PC-9 (cell line): ENCODE measurements at regions of chr19 and their contacts with region 1.

Region 1: GRCh38 chr19:47514869-47515588 is at the start of gene NAPA:
- DNase-seq: peak; percentile 99 to 100
- H3K4me3 ChIP-seq: peak within 1 kb of the TSS; percentile 94
- H3K27ac ChIP-seq: peak within 1 kb of the TSS; percentile 55
- H3K4me1 ChIP-seq: peaks cover 14% of the 10 kb centered on the region
- H3K27me3 ChIP-seq: no peaks in the 10 kb centered on the region
- CTCF ChIP-seq: no peak
- total RNA-seq, gene NAPA: 78.3 and 80.4 TPM in 2 replicates

Region 2: GRCh38 chr19:46346821-46347571 is 1168.0 kb before region 1 on chr19 and contains the start of gene PPP5C:
- CTCF ChIA-PET with region 1: interaction called, 11 read pairs
- POLR2A ChIA-PET with region 1: no interaction called
- intact Hi-C with region 1: no loop called
- DNase-seq: peak; percentile 86 to 93
- H3K4me3 ChIP-seq: peak within 1 kb of the TSS; percentile 97
- H3K27ac ChIP-seq: peak within 1 kb of the TSS; percentile 20; the same call in 1 of the 2 replicates
- H3K4me1 ChIP-seq: peaks cover 12% of the 10 kb centered on the region
- H3K27me3 ChIP-seq: peaks cover 13% of the 10 kb centered on the region
- CTCF ChIP-seq: peak; percentile 97
- total RNA-seq, gene PPP5C: 74.7 and 85.4 TPM in 2 replicates

Region 3: DNA sequence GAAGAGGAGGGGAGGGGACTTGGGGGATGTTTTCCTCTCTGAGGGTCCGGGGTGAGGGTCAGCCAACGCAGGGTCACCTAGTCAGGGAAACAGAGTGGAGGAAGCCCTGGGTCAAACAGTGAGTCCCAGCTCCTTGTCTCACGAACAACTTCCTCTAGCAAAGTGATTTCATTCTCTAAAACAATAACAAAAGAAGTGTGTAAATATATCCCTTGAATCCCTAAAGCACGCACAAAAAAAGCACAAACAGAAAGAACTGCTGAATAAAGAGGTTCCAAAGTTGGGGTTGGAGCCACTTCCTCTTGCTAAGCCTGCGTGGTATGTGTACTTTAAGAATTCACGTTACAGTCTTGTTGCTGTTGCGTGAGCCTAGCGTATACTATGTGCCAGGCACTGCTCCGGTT is 184.6 kb before region 1 on chr19:
- CTCF ChIA-PET with region 1: interaction called, 12 read pairs
- POLR2A ChIA-PET with region 1: no interaction called
- intact Hi-C with region 1: no loop called
- DNase-seq: no peak
- H3K4me3 ChIP-seq: no peak overlapping the region
- H3K27ac ChIP-seq: no peak overlapping the region
- H3K4me1 ChIP-seq: no peaks in the 10 kb centered on the region
- H3K27me3 ChIP-seq: 0 out of 2 replicates have a peak, but pooled peaks cover 3% of the 10 kb centered on the region
- CTCF ChIP-seq: no peak

Region 4: DNA sequence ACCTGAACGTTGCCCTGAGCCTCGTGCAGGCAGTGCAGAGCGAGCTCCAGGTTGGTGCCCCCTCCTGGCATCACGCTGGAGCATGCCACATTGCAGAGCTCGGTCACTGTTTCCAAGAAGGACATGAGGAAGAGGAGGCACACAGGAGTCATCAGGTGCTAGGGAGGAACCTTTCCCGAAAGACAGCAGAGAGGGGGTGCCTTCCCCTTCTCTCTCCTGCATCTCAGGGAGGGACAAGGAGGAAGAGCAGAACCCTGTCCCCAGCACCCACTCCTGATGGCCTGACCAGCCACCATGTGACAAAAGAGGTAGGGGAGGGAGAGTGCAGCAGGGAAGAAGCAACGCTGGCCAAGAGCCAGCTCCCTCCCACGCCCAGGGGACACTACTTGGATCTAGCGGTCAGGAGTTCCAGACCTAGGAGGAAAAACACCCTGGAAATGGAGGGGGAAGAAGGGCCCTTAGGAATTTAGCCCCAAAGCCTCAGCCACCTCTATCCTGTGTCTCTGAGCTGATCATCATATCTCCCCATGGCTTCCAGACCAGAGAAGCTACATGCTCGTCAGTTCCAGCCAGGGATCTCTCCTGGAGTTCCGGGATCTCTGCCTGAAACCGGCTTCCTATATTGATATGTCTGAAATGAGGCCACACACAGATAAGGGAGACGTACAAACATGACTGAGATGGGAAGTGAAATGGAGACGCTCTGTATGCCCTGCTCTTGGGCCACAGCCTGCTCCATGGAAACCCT is 16.8 kb after region 1 on chr19:
- CTCF ChIA-PET with region 1: interaction called, 18 read pairs
- POLR2A ChIA-PET with region 1: no interaction called
- intact Hi-C with region 1: no loop called
- DNase-seq: no peak
- H3K4me3 ChIP-seq: no peak overlapping the region
- H3K27ac ChIP-seq: no peak overlapping the region
- H3K4me1 ChIP-seq: no peaks in the 10 kb centered on the region
- H3K27me3 ChIP-seq: no peaks in the 10 kb centered on the region
- CTCF ChIP-seq: no peak

Region 5: DNA sequence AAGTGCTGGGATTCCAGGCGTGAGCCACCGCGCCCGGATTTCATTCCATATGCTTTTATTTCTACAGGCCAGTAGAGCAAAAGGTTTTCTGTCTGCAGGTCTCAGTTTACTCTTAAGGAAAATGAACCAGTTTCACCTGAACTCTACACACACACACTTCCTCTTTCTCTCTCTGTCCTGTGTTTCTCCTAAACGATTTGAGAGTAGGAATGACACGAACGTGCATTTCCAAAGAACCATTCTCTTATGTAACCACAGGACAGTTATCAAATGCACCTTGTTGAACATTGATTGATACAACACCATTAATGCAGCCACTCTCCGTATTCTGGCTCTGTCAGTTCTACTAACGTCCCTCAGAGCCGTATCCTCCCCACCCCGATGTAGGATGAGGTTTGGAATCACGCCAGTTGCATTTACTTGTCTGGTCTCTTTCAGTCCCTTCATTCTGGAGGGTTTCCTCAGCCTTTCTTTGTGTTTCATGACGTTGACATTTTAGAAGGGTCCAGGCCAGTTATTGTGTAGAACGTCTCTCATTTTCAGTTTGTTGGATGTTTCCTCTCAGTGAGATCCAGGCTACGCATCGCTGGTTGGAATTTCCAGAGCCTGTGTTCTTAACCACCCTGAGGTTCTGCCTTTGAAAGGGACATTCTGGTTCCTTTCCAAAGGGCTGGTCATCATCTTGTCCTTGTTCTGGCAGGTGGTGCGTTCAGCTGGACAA is 129.9 kb after region 1 on chr19:
- CTCF ChIA-PET with region 1: no interaction called
- POLR2A ChIA-PET with region 1: no interaction called
- intact Hi-C with region 1: loop called (anchors 1 kb)
- DNase-seq: no peak
- H3K4me3 ChIP-seq: no peak overlapping the region
- H3K27ac ChIP-seq: 0 out of 2 replicates have a peak overlapping the region, but pooled peaks have one; percentile 15
- H3K4me1 ChIP-seq: peaks cover 50% of the 10 kb centered on the region
- H3K27me3 ChIP-seq: no peaks in the 10 kb centered on the region
- CTCF ChIP-seq: no peak

Region 6: GRCh38 chr19:47697863-47698609 is 183.0 kb after region 1 on chr19:
- CTCF ChIA-PET with region 1: no interaction called
- POLR2A ChIA-PET with region 1: no interaction called
- intact Hi-C with region 1: loop called (anchors 1 kb)
- DNase-seq: peak; percentile 70 to 78
- H3K4me3 ChIP-seq: no peak overlapping the region
- H3K27ac ChIP-seq: 0 out of 2 replicates have a peak overlapping the region, but pooled peaks have one; percentile 27
- H3K4me1 ChIP-seq: no peaks in the 10 kb centered on the region
- H3K27me3 ChIP-seq: no peaks in the 10 kb centered on the region
- CTCF ChIP-seq: peak; percentile 99